Endothelial cell of umbilical vein (primary cell): ENCODE measurements at regions of chr3 and their contacts with region 1.

Region 1: GRCh38 chr3:49076646-49077045 is 17.2 kb downstream of the QRICH1 start:
- DNase-seq: no peak
- H3K4me3 ChIP-seq: no peak overlapping the region
- H3K27ac ChIP-seq: no peak overlapping the region
- H3K4me1 ChIP-seq: no peaks in the 10 kb centered on the region
- H3K27me3 ChIP-seq: no peaks in the 10 kb centered on the region
- CTCF ChIP-seq: no peak
- POLR2A ChIP-seq: no peak

Region 2: DNA sequence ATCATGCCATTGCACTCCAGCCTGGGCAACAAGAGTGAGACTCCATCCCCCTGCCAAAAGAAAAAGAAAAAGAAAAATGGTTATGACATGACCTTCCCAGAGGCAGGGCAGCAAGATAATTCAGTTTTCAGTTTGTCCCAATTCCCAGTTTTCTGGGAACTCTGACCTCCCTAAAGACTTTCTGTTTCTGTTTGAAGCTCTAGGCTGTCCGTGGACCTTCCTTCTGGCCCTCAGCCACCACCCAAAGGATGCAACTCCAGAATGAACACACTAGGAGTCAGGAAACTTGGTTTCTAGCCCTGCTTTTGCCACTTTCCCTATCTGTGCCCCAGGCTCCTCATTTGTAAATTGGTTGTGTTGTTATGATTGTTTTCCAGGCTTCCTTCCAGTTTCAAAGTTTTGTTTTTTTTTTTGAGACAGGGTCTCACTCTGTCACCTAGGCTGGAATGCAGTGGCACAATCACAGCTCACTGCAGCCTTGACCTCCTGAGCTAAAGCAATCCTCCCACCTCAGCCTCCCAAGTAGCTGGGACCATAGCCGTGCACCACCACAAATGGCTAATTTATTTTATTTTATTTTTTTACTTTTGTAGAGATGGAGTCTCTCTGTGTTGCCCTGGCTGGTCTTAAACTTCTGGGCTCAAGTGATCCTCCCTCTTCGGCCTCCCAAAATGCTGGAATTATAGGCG is 957.0 kb before region 1 on chr3:
- CTCF ChIA-PET with region 1: no interaction called
- POLR2A ChIA-PET with region 1: interaction called, 11 read pairs
- dilution Hi-C with region 1: no loop called
- intact Hi-C with region 1: no loop called
- DNase-seq: no peak
- H3K4me3 ChIP-seq: no peak overlapping the region
- H3K27ac ChIP-seq: no peak overlapping the region
- H3K4me1 ChIP-seq: no peaks in the 10 kb centered on the region
- H3K27me3 ChIP-seq: no peaks in the 10 kb centered on the region
- CTCF ChIP-seq: no peak
- POLR2A ChIP-seq: no peak

Region 3: DNA sequence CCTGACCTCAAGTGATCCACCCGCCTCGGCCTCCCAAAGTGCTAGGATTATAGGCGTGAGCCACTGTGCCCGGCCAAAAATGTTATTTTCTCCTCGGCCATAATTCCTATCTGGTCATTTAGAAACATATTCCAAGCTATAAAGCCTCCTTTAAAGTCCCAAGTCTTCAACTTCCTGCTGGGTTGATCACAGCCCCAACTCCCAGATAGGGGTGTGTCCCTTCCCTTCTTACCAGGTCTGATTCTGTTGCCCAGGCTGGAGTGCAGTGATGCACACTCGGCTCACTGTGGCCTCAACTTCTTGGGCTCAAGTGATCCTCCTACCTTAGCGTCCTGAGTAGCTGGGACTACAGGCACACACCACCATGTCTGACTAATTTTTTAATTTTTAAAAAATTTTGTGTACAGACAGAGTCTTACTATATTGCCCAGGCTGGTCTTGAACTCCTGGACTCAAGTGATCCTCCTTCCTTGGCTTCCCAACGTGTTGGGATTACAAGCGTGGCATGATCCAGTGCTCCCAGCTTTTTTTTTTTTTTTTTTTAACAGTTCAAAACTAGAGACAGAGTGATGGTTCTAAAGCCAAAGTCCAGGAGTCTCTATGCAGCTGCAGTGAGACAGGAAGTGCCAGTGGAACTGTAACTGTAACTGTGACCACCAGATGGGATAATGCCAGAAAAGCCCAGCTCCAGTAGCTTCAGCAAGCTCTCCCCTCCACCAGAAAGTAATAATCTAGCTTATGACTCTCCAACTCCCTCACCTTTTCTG is 220.8 kb before region 1 on chr3:
- CTCF ChIA-PET with region 1: no interaction called
- POLR2A ChIA-PET with region 1: no interaction called
- dilution Hi-C with region 1: no loop called
- intact Hi-C with region 1: loop called (anchors 5 kb)
- DNase-seq: no peak
- H3K4me3 ChIP-seq: no peak overlapping the region
- H3K27ac ChIP-seq: no peak overlapping the region
- H3K4me1 ChIP-seq: no peaks in the 10 kb centered on the region
- H3K27me3 ChIP-seq: no peaks in the 10 kb centered on the region
- CTCF ChIP-seq: no peak
- POLR2A ChIP-seq: no peak

Region 4: GRCh38 chr3:49327485-49327884 is 250.8 kb after region 1 on chr3:
- CTCF ChIA-PET with region 1: no interaction called
- POLR2A ChIA-PET with region 1: no interaction called
- dilution Hi-C with region 1: no loop called
- intact Hi-C with region 1: no loop called
- DNase-seq: peak; percentile 7
- H3K4me3 ChIP-seq: no peak overlapping the region
- H3K27ac ChIP-seq: no peak overlapping the region
- H3K4me1 ChIP-seq: no peaks in the 10 kb centered on the region
- H3K27me3 ChIP-seq: no peaks in the 10 kb centered on the region
- CTCF ChIP-seq: peak in 1 of 2 donors; percentile 14
- POLR2A ChIP-seq: no peak